HEK293 (cell line): ENCODE measurements at regions of chrX and their contacts with region 1.

Region 1: DNA sequence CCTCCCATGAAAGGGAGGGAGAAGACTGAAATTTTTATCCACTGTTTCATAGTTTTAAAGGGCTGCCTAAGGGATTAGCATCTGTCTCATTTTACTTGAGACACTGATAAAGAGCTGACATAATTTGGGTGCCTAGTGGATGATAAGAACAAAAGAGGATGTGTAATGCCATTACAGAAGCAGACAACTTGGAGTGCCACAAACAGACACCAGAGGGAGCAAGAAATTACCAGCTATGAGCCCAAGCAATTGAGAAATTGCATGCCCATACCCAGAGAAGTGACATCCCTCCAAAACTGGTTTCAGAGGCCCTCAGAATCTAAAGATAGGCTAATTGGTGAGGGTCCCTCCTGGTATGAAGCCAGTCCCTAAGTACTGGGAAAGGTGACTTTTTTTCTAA is 38.5 kb upstream of the POU3F4 start:
- H3K4me3 ChIP-seq: no peak overlapping the region
- H3K27ac ChIP-seq: no peak overlapping the region
- H3K4me1 ChIP-seq: no peaks in the 10 kb centered on the region
- CTCF ChIP-seq: peak; percentile 59

Region 2: GRCh38 chrX:83630662-83631061 is 161.1 kb after region 1 on chrX:
- CTCF ChIA-PET with region 1: interaction called, 33 read pairs
- POLR2A ChIA-PET with region 1: no interaction called
- H3K4me3 ChIP-seq: no peak overlapping the region
- H3K27ac ChIP-seq: no peak overlapping the region
- H3K4me1 ChIP-seq: no peaks in the 10 kb centered on the region
- CTCF ChIP-seq: no peak